WTC11 (cell line): ENCODE measurements at regions of chr3 and their contacts with region 1.

Region 1: GRCh38 chr3:186540221-186540834 is 3.9 kb downstream of the CRYGS start:
- DNase-seq: peak; percentile 75
- ATAC-seq: peak; percentile 86
- H3K4me3 Mint-ChIP-seq: no peak overlapping the region
- H3K27ac Mint-ChIP-seq: peak overlapping the region; percentile 22
- H3K4me1 Mint-ChIP-seq: peaks cover 6% of the 10 kb centered on the region
- H3K27me3 Mint-ChIP-seq: no peaks in the 10 kb centered on the region
- CTCF ChIP-seq: peak; percentile 40; the same call in 1 of the 2 replicates

Region 2: GRCh38 chr3:186002884-186003472 is 537.4 kb before region 1 on chr3:
- CTCF ChIA-PET with region 1: interaction called, 10 read pairs
- POLR2A ChIA-PET with region 1: no interaction called
- DNase-seq: peak; percentile 36
- ATAC-seq: peak; percentile 94
- H3K4me3 Mint-ChIP-seq: no peak overlapping the region
- H3K27ac Mint-ChIP-seq: no peak overlapping the region
- H3K4me1 Mint-ChIP-seq: no peaks in the 10 kb centered on the region
- H3K27me3 Mint-ChIP-seq: no peaks in the 10 kb centered on the region
- CTCF ChIP-seq: 0 out of 2 replicates have a peak, but pooled peaks have one; percentile 31

Region 3: DNA sequence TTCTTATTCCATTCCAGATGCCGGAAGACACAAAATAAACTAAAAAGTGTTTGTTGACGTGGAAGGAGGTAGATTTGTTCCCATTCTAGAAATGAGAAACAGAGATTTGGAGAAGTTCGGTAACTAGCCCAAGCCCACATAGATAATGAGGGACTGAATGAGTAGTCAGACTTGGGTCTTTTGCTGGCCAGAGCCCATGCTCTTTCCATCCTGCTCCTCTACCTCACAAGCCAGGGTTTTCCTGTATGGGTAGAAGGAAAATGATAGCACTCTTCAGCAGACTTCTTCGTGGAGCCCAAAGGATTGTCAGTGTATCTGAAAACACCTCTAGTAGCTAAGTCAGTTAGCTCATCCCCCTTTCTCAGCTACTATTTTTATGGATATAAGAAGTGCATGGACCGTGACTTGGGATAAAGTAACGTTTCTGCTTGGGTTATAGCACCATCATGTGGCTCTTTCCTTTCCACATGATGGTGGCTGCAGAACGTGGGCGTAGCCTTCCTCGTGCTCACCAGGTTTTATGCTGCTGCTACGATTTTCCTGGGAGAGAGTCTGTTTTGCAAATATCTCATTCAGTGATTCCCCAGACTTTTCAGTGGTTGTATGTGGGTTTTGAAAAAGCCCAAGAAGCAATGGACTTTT is 262.9 kb before region 1 on chr3:
- CTCF ChIA-PET with region 1: interaction called, 27 read pairs
- POLR2A ChIA-PET with region 1: no interaction called
- DNase-seq: no peak
- ATAC-seq: peak; percentile 98
- H3K4me3 Mint-ChIP-seq: no peak overlapping the region
- H3K27ac Mint-ChIP-seq: no peak overlapping the region
- H3K4me1 Mint-ChIP-seq: peaks cover 11% of the 10 kb centered on the region
- H3K27me3 Mint-ChIP-seq: no peaks in the 10 kb centered on the region; the same call in 1 of the 2 replicates
- CTCF ChIP-seq: no peak

Region 4: DNA sequence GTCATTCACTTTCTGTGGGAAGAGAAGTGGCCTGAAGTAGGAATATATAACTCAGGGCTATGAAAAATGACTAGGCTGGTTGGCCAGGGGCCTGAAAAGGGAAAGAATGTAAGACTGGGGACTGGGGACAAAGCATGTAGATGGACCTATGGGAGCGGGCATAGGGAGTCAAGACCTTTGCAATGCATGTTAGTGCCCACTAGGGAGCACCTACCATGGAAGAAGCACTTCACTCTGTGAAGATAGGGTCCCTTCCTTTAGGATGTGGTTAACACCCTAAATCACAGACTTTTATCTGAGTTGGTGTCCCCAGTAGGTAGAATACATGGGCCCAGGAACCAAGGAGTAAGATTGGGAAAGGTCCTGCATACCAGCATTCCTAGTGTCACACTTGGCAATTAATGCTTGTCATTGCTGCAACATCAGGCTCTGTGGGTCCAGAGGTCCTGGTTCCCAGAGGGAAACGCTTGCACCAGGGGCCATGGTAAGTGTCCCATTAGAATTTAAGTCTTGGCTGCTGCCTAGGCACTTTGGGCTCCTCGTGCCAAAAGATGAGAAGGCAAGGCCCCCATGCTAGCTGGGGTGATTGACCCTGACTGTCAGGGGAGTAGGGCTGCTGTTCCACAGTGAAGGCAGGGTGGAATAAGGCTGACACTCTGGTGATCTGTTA is 75.8 kb before region 1 on chr3:
- CTCF ChIA-PET with region 1: interaction called, 11 read pairs
- POLR2A ChIA-PET with region 1: no interaction called
- DNase-seq: no peak
- ATAC-seq: peak; percentile 98
- H3K4me3 Mint-ChIP-seq: no peak overlapping the region
- H3K27ac Mint-ChIP-seq: no peak overlapping the region
- H3K4me1 Mint-ChIP-seq: no peaks in the 10 kb centered on the region
- H3K27me3 Mint-ChIP-seq: no peaks in the 10 kb centered on the region
- CTCF ChIP-seq: 0 out of 2 replicates have a peak, but pooled peaks have one; percentile 23

Region 5: DNA sequence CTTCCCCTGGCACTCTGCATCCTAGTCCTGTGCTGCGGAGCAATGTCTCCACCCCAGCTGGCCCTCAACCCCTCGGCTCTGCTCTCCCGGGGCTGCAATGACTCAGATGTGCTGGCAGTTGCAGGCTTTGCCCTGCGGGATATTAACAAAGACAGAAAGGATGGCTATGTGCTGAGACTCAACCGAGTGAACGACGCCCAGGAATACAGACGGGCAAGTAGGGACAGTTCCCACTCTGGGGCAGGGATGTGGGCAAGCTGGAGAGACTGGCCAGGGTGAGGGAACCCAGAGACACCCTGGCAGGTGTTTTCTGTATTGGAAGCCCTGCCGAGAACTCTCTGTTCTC is 100.1 kb after region 1 on chr3:
- CTCF ChIA-PET with region 1: no interaction called
- POLR2A ChIA-PET with region 1: no interaction called
- DNase-seq: no peak
- ATAC-seq: peak; percentile 84
- H3K4me3 Mint-ChIP-seq: no peak overlapping the region
- H3K27ac Mint-ChIP-seq: no peak overlapping the region
- H3K4me1 Mint-ChIP-seq: peaks cover 34% of the 10 kb centered on the region
- H3K27me3 Mint-ChIP-seq: peaks cover 11% of the 10 kb centered on the region
- CTCF ChIP-seq: no peak